ENCODE measurements at regions of chr2 and their contacts with region 1.

Region 1: DNA sequence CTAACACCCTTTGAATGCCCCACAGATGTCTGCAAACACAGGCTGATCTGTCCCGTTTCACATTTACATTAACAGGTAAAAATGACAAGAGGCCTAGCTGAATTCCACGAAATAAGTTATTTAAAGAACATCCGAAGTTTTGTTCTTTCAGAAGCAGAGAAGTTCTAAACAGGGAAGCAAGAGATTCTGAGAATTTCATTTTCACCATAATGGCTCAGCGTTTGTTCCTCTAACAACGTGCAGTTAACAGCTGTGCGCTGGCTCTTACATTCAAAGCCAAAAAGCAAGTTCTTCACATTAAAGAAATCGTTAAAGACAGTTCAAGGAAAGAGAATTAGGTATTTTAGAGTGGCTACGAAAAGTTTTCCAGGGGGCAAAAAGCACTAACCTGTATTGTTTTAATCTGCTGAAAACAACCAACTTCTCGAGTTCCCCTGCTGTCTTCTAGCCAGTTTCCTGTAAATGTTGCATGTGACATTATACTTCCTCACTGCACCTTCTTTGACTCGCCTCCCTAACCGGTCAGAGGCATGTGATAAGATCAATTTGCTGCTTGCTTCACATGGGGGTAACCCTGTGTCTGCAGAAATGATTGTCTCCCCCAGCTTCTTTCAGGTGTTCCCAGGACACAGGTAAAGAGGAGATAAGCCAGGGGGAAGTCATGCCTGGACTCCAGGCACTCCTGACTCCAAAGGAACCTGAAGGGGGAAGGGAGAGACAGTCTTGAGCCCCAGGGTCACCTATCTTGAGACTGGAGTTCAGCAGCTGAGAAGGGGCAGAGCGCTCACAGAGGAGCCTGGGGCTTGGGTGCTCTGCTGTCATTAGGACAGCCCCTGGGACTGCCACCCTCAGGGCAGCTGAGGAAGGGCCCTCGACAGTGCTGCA is 36.8 kb upstream of the WIPF1 start:
- DNase-seq: peak; percentile 38
- H3K4me3 Mint-ChIP-seq: peak overlapping the region; percentile 90
- H3K27ac Mint-ChIP-seq: peak overlapping the region; percentile 92
- H3K4me1 Mint-ChIP-seq: peaks cover 69% of the 10 kb centered on the region
- H3K27me3 Mint-ChIP-seq: no peaks in the 10 kb centered on the region

Region 2: DNA sequence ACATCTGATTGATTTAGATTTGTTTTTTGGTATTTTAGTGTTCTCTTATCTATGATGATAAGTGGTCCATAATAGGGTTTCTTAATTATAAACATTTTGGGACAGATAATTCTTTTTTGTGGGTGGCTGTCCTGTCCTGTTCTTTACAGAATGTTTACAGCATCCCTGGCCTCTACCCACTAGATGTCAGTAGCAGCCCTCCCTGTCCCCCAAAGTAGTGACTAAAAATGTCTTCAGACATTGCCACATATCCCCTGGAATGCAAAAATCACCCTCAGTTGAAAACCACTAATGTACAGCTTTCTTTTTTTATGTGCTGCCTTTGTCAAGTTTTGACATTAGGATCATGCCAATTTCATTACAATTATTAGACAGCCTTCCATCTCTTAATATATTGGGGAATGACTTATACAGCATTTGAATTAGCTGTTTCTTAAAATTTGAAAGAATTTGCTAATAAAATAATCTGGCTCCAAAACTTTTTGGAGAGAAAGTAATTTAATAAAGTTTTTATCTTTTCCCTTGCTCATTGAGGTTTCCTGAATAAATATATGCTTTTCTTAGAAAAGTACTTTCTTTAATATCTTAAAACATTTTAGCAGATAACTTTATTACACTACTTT is 56.3 kb before region 1 on chr2:
- intact Hi-C with region 1: loop called (anchors 10 kb)
- DNase-seq: no peak
- H3K4me3 Mint-ChIP-seq: no peak overlapping the region
- H3K27ac Mint-ChIP-seq: no peak overlapping the region
- H3K4me1 Mint-ChIP-seq: peaks cover 54% of the 10 kb centered on the region
- H3K27me3 Mint-ChIP-seq: no peaks in the 10 kb centered on the region

Region 3: GRCh38 chr2:174607989-174608865 is 26.1 kb before region 1 on chr2:
- intact Hi-C with region 1: loop called (anchors 1 kb)
- DNase-seq: no peak
- H3K4me3 Mint-ChIP-seq: peak overlapping the region; percentile 45
- H3K27ac Mint-ChIP-seq: peak overlapping the region; percentile 92
- H3K4me1 Mint-ChIP-seq: peaks cover 77% of the 10 kb centered on the region
- H3K27me3 Mint-ChIP-seq: no peaks in the 10 kb centered on the region

Region 4: GRCh38 chr2:174623690-174624089 is 10.7 kb before region 1 on chr2:
- intact Hi-C with region 1: loop called (anchors 1 kb)
- DNase-seq: no peak
- H3K4me3 Mint-ChIP-seq: no peak overlapping the region
- H3K27ac Mint-ChIP-seq: peak overlapping the region; percentile 19
- H3K4me1 Mint-ChIP-seq: peaks cover 57% of the 10 kb centered on the region
- H3K27me3 Mint-ChIP-seq: no peaks in the 10 kb centered on the region

Region 5: GRCh38 chr2:174682578-174683391 is 48.4 kb after region 1 on chr2:
- intact Hi-C with region 1: loop called (anchors 1 kb)
- DNase-seq: peak; percentile 48
- H3K4me3 Mint-ChIP-seq: peak overlapping the region; percentile 89
- H3K27ac Mint-ChIP-seq: peak overlapping the region; percentile 91
- H3K4me1 Mint-ChIP-seq: peaks cover 28% of the 10 kb centered on the region
- H3K27me3 Mint-ChIP-seq: peaks cover 7% of the 10 kb centered on the region

Region 6: GRCh38 chr2:174888646-174889271 is 254.4 kb after region 1 on chr2:
- intact Hi-C with region 1: no loop called
- DNase-seq: no peak
- H3K4me3 Mint-ChIP-seq: no peak overlapping the region
- H3K27ac Mint-ChIP-seq: no peak overlapping the region
- H3K4me1 Mint-ChIP-seq: peaks cover 5% of the 10 kb centered on the region
- H3K27me3 Mint-ChIP-seq: no peaks in the 10 kb centered on the region